GM10248 (cell line): ENCODE measurements at regions of chr9 and their contacts with region 1.

Region 1: GRCh38 chr9:68567565-68567964 is 26.9 kb upstream of the TMEM252 start:
- DNase-seq: no peak
- CTCF ChIP-seq: no peak

Region 2: GRCh38 chr9:68455451-68455850 is 112.1 kb before region 1 on chr9:
- CTCF ChIA-PET with region 1: no interaction called
- POLR2A ChIA-PET with region 1: no interaction called
- DNase-seq: no peak
- CTCF ChIP-seq: no peak

Region 3: DNA sequence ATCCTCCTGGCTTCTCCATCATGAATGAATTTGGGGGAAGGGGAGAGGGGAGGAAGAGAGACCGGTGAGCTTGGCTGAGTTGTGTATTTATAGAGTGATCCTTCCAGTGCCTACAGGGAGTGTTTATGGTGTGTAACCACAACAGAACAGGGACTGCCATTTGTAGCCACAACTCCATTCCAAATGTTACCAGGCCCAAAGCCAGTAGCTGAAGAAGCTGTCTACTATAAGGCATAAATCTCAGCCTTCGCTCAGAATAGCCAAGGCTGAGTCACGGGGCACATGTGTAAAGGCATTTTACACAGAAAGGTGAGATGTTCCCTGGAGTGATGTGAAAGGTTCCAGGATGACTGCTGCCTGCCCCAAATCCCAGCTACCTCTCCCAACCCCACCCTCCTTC is 29.4 kb before region 1 on chr9:
- CTCF ChIA-PET with region 1: interaction called, 15 read pairs
- POLR2A ChIA-PET with region 1: no interaction called
- DNase-seq: no peak
- CTCF ChIP-seq: no peak

Region 4: DNA sequence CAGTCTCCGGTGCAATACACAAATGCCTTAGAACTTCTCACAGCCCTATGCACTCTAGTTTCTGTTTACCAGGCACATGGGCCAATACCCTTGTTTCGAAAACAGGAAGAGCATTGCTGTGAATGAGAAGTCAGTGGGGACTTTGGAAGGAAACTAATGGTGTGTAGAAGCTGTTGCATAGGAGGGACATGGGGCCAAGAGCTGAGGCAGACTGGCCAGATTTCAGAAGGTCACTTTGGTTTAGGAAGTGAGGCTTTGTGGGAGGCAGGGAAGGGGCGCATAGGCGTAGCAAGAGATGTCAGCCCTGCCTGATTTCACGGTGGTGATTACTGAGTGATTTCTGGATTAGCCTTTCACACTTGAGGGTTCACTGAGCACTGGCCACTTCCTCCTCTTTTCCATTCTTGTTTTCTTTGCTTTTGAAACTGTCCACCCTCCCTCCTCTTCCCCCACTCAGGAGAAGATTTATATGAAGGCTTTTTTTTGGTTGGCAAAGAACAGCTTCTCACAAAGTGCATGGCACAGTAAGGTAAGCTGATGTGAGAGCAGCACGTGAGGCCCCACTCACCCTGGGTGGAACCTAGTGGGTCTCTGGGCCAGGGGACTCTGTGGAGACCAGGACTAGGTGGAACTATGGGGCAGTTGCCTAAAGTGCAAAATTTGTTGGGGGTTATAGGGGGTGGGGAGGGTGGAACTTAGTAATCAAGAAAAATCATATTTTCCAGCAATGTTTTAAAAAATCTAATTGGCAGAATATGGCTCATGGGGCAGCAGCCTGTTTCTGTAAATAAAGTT is 20.8 kb before region 1 on chr9:
- CTCF ChIA-PET with region 1: interaction called, 24 read pairs
- POLR2A ChIA-PET with region 1: no interaction called
- DNase-seq: peak; percentile 49
- CTCF ChIP-seq: no peak

Region 5: GRCh38 chr9:68577774-68578591 is 10.4 kb after region 1 on chr9:
- CTCF ChIA-PET with region 1: interaction called, 131 read pairs
- POLR2A ChIA-PET with region 1: no interaction called
- DNase-seq: peak; percentile 32
- CTCF ChIP-seq: no peak

Region 6: DNA sequence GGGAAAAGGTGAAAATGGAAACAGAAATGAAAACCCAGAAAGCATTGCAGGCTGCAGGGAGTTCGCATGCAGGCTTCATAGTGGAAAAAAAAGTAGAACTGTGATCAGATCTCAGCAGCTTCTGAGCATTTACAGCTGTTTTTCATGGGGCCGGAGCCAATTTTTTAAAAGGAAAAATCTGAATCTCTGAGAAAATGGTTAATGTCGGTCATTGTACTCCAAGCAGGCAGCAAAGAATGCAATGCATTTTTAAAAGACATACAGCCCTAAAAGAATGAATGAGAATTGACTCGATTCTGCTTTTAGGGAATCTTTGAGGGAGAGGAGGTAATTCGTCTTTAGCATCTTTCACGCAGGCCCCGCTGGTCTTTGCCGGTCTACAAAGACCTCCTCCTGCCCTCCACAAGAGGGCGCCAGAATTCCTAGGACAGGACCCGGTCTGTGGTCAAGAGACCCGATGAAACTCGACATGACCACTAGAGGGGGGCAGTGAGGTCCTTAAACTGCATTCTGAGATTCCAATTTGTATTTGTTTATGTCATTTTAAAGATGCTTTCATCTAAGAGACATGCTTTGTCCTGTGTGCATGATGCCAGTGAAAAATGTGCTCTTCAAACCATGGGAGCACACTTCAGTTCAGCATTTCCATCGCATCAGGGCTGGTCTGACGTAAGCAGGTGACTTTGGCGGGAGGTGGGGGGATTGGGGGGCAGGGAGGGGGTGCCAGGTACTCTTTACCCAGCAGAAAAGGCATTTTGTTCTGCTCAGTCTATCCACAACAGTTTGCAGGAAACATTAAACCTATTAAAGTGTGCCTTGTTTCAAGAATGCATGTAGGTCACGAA is 16.8 kb after region 1 on chr9:
- CTCF ChIA-PET with region 1: interaction called, 52 read pairs
- POLR2A ChIA-PET with region 1: no interaction called
- DNase-seq: peak; percentile 86
- CTCF ChIP-seq: peak; percentile 99